AG04450 (cell line): ENCODE measurements at regions of chr12 and their contacts with region 1.

Region 1: DNA sequence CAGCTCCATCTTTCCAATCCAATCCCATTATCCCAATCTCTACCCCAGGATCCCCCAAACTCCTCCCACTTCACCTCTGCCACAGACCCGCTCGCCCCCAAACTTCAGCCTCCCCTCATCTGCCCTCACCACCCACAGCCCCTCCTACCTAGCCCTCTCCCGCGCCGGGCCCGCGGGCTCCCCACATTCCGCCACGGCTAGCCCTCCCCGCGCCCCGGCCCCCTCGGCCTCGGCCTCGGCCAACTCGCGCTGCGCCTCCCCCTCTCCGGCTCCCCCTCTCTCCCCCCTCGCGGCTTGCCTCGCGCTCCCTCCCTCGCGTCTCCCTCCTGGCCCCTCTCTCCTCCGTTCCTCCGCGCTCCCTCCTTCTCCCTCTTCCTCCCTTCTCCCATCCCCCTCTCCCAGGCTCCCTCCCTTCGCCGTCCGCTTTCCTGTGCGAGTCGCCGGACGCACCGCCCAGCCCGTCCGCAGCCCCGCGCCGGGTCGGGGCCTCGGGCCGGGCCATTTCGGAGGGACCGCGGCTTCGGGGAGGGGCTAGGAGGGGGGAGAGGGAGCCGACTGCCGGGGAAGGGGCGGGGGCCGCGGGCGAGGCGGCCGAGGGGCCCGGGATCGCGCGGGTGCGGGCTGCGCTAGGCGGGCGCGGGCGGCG is at the start of gene ATN1:
- DNase-seq: peak; percentile 47
- H3K4me3 ChIP-seq: peak within 1 kb of the TSS; percentile 68
- H3K27ac ChIP-seq: peak within 1 kb of the TSS; percentile 90
- H3K27me3 ChIP-seq: no peaks in the 10 kb centered on the region
- CTCF ChIP-seq: no peak
- polyA plus RNA-seq, gene ATN1: 11.2 and 21.4 TPM in 2 replicates

Region 2: GRCh38 chr12:6867413-6868210 is 59.9 kb before region 1 on chr12 and contains the start of gene TPI1:
- CTCF ChIA-PET with region 1: interaction called, 8 read pairs
- POLR2A ChIA-PET with region 1: interaction called, 21 read pairs
- DNase-seq: peak; percentile 51
- H3K4me3 ChIP-seq: peak within 1 kb of the TSS; percentile 90
- H3K27ac ChIP-seq: peak within 1 kb of the TSS; percentile 39
- H3K27me3 ChIP-seq: no peaks in the 10 kb centered on the region
- CTCF ChIP-seq: no peak
- polyA plus RNA-seq, gene TPI1: 1,246 and 1,347 TPM in 2 replicates

Region 3: DNA sequence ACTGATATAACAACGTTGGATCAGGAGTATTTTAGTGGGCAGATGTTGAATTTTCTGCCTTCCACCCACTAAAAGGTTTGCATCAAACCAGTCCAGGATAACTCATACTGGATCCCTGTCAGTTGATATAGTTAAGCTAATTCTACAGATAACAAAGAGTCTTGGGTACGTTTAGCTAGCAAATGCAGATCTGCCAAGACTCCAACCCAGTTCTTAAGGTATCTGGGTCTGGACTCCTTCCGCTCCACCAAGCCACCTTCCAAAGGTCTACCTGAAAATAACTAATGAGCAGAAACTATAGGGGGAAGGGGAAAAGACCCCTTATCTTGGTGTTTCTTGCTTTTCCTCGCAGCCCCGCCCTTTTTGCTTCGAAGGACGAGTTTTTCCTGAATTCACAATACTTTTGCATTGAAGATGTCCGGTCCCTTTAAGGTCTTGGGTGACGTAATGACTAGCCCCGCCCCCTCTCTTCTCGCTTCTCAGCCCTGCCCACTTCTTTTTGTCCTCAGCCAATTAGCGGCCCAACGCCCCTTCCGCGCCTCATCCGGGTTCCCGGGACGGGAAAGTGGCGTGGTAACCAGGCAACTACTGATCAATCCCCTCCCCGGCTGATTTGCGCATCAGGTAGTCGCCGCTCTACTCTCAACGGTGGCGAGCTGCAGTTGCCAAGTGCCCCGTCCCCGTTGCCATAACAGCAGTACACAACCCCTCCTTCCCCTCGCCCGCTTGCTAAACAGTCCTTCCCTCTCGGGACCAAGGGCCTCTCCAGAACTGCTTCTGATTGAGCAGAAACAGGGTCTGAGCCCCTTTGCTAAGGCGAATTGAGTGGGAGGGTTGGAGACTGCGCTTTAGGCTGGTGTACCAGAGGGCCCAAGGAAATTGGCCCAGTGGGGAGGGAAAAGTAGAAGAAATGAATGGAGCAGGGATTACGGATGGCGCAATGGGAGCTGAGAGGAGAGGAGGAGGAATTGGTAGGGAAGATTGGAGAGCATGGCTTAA is 22.9 kb before region 1 on chr12 and contains the start of gene LRRC23:
- CTCF ChIA-PET with region 1: interaction called, 23 read pairs
- POLR2A ChIA-PET with region 1: no interaction called
- DNase-seq: peak; percentile 83
- H3K4me3 ChIP-seq: peak within 1 kb of the TSS; percentile 96
- H3K27ac ChIP-seq: peak within 1 kb of the TSS; percentile 57
- H3K27me3 ChIP-seq: no peaks in the 10 kb centered on the region
- CTCF ChIP-seq: no peak
- polyA plus RNA-seq, gene LRRC23: 10.4 and 10.6 TPM in 2 replicates

Region 4: DNA sequence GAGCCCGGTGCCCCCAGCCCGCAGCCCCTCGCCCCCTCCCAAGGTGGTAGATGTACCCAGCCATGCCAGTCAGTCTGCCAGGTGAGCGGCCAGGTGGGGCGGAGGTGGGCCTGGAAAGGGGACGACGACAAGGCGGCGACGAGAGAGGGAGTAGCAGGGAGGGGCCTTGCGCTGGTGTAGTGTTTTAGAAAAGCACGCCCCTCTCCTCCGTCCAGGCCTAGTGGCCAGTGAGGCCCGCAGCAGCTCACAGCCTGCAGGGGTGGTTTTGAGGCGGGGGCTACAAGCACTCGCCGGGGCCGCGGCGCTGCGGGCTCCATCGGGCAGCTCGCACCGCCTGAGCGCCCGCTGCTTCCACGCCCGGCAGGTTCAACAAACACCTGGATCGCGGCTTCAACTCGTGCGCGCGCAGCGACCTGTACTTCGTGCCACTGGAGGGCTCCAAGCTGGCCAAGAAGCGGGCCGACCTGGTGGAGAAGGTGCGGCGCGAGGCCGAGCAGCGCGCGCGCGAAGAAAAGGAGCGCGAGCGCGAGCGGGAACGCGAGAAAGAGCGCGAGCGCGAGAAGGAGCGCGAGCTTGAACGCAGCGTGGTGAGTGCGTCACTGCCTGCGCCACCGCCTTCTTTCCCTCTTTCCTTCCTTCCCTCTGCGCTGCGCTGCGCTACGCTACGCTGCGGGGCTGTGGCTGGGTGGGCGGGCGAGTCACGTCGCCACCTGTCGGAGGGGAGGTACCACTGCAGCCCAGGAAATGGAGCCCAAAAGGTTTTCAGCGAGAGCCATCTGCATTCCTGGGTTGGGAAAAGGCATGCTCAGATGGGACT is 10.2 kb after region 1 on chr12:
- CTCF ChIA-PET with region 1: interaction called, 33 read pairs
- POLR2A ChIA-PET with region 1: interaction called, 36 read pairs
- DNase-seq: peak; percentile 84
- H3K4me3 ChIP-seq: peak overlapping the region; percentile 61
- H3K27ac ChIP-seq: peak overlapping the region; percentile 61
- H3K27me3 ChIP-seq: no peaks in the 10 kb centered on the region
- CTCF ChIP-seq: peak; percentile 93

Region 5: GRCh38 chr12:6965026-6965661 is 37.6 kb after region 1 on chr12:
- CTCF ChIA-PET with region 1: interaction called, 49 read pairs
- POLR2A ChIA-PET with region 1: interaction called, 3 read pairs
- DNase-seq: peak; percentile 79
- H3K4me3 ChIP-seq: no peak overlapping the region
- H3K27ac ChIP-seq: peak overlapping the region; percentile 68
- H3K27me3 ChIP-seq: no peaks in the 10 kb centered on the region
- CTCF ChIP-seq: peak; percentile 85